ENCODE measurements at regions of chr4 and their contacts with region 1.

Region 1: DNA sequence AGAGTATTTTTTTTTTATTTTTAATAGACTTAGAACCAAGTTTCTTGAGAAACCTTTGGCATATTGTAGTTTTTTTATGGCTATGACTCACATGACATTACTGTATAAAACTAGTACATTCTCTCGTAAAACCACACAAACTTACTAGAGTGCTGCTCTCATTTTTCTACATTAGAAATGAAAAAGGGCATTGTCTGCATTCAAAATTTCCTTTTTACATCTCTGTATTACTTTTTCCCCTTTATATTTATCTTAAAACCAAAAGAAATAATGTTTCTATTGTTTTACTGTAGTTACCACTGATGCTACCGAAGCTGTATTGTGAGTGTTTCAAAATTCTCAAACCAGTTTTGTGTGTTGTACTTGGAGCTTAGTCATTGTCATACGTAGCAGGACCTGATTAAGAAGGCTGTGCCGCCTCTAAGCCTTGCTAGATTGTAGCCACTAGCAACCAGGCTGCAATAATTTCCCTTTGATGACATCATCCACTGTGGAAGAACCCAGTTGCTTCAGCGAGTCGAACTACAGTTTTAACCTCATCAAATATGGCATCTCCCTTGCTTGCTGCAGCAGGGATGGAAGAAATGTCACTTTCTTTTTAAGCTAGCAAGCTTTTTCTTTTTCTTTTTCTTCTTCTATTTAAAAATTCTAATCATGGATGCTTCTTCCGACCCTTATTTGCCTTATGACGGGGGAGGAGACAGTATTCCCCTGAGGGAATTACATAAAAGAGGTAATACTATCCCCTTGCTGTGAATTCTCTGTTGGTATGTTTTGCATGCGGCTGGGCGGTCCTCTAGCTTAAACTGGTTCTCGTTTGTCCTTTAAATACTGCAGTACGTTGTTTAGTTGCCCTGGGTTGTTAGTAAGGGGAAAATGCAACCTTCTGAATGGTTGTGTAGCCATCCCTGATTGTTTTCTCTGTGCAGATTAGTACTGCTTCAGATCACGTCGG is 39.6 kb downstream of the CLCN3 start:
- DNase-seq: peak; percentile 74
- H3K4me3 Mint-ChIP-seq: peak overlapping the region; percentile 82
- H3K27ac Mint-ChIP-seq: peak overlapping the region; percentile 98
- H3K4me1 Mint-ChIP-seq: peaks cover 27% of the 10 kb centered on the region
- H3K27me3 Mint-ChIP-seq: no peaks in the 10 kb centered on the region

Region 2: DNA sequence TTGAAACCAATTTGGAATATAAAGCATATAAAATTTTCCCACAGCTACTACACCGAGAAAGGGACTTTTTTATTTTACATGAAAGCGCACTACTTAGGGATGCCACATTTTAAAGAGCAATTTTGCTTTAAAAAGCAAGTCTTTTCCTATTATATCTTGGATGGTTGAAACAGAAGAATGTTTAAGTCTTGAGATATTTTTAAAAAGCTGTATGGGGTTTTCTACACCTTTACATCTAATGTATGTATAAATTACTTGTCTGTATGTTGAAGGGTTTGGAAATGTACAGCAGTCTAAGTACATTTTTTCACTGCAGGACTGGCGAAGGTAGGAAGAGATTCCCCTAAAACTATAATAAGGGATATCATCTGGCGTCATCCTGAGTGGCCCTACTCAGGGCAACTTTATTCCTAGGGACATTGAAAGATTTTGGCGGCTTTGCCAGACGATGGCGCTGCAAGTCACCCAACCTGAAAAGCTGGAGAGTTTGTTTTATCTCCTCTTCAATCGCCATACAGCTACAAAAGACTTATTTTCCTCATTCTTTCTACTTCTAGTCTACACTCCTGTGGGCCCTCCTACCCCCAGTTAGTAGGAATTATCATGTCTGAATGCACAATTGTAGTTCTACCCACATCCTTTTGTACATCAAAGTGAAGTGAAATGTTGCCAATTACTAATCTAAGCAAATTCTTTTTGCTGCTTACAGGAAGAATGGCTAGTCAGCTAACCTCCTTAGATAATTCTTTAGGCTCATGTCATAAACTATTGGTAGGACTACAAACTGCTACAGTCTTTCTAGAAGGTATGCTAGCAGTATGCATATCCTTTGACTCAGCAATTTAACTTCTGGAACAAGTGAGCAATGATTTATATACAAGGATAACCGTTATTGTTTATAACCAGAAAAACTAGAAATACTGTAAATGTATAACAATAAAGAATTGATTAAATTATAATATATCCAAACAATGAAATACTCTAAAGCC is 46.8 kb before region 1 on chr4:
- intact Hi-C with region 1: loop called (anchors 2 kb)
- DNase-seq: peak; percentile 66
- H3K4me3 Mint-ChIP-seq: peak overlapping the region; percentile 96
- H3K27ac Mint-ChIP-seq: peak overlapping the region; percentile 98
- H3K4me1 Mint-ChIP-seq: peaks cover 50% of the 10 kb centered on the region
- H3K27me3 Mint-ChIP-seq: no peaks in the 10 kb centered on the region

Region 3: DNA sequence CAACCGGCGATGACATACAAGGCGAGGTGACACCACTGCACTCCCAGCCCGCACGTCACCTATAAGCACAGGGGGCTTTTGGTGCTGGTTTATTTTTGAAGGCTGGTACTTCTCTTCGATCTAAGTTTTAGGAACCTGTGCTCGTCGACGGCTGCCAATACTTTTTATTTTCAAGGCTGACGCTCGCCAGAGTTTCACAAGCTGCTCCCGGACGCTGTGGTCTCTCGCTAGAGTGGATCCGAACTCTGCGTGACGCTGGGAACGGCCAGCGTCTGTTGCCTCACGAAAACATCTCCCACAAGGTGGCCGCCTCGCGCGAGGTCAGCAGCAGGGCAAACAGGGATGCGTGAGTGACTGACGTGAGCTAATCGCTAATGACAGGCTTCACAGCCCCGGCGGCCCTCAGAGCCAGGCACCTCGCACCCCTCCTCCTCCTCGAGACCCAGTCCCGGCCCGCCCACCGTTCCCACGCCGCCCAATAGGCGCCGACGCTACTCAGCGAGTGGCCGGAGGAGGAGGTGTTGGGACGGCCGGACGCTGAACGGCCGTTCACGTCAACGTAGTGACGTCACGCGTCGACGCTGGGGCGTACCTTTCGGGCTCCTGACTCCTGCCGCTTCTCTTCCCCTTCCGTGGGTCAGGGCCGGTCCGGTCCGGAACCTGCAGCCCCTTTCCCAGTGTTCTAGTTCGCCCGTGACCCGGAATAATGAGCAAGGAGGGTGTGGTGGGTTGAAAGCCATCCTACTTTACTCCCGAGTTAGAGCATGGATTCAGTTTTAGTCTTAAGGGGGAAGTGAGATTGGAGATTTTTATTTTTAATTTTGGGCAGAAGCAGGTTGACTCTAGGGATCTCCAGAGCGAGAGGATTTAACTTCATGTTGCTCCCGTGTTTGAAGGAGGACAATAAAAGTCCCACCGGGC is 39.8 kb before region 1 on chr4 and contains the start of gene CLCN3:
- intact Hi-C with region 1: loop called (anchors 1 kb)
- DNase-seq: peak; percentile 85
- H3K4me3 Mint-ChIP-seq: peak within 1 kb of the TSS; percentile 99
- H3K27ac Mint-ChIP-seq: peak within 1 kb of the TSS; percentile 99
- H3K4me1 Mint-ChIP-seq: peaks cover 62% of the 10 kb centered on the region
- H3K27me3 Mint-ChIP-seq: no peaks in the 10 kb centered on the region
- total RNA-seq, gene CLCN3: 23.8 and 25.6 TPM in 2 replicates

Region 4: GRCh38 chr4:169707958-169708643 is 48.1 kb after region 1 on chr4:
- intact Hi-C with region 1: loop called (anchors 5 kb)
- DNase-seq: no peak
- H3K4me3 Mint-ChIP-seq: no peak overlapping the region
- H3K27ac Mint-ChIP-seq: no peak overlapping the region
- H3K4me1 Mint-ChIP-seq: peaks cover 2% of the 10 kb centered on the region
- H3K27me3 Mint-ChIP-seq: no peaks in the 10 kb centered on the region

Region 5: GRCh38 chr4:169723207-169723965 is 63.4 kb after region 1 on chr4:
- intact Hi-C with region 1: loop called (anchors 5 kb)
- DNase-seq: no peak
- H3K4me3 Mint-ChIP-seq: no peak overlapping the region
- H3K27ac Mint-ChIP-seq: no peak overlapping the region
- H3K4me1 Mint-ChIP-seq: peaks cover 5% of the 10 kb centered on the region
- H3K27me3 Mint-ChIP-seq: no peaks in the 10 kb centered on the region

Region 6: DNA sequence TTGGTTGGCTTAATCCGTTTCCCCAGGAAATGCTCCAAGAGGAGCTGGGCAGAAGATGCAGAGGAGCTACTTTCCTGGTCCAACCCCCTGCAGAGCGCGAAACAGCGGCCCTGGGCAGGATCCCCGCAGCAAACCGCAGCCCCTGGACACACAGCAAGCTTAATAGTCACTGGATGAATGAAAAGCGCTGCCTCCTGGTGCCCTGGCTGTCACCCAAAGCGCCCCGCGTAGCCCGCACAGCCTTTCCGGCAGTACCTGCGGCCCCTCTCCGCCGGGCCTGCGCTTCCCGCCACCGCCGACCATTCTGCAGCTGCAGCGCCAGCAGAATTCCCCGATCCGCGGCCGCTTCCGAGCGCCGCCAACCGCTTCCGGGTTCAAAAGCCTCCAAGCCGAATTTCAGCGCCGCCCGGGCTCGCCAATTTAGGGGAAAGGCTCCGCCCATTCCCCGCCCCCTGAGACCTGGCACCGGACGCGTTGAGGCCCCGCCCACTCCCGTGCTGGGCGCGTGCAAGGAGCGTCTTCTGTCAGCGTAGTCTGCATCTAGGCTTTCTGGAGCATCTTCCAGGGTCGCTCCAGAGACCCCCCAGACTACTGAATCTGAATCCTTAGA is 97.7 kb after region 1 on chr4 and contains the start of gene HPF1:
- intact Hi-C with region 1: loop called (anchors 1 kb)
- DNase-seq: peak; percentile 90
- H3K4me3 Mint-ChIP-seq: peak within 1 kb of the TSS; percentile 91
- H3K27ac Mint-ChIP-seq: peak within 1 kb of the TSS; percentile 67
- H3K4me1 Mint-ChIP-seq: peaks cover 27% of the 10 kb centered on the region
- H3K27me3 Mint-ChIP-seq: peaks cover 11% of the 10 kb centered on the region
- total RNA-seq, gene HPF1: 23.6 and 24.1 TPM in 2 replicates

Region 7: GRCh38 chr4:170027181-170027829 is 367.3 kb after region 1 on chr4:
- intact Hi-C with region 1: loop called (anchors 1 kb)
- DNase-seq: peak; percentile 83
- H3K4me3 Mint-ChIP-seq: peak overlapping the region; percentile 79
- H3K27ac Mint-ChIP-seq: peak overlapping the region; percentile 63
- H3K4me1 Mint-ChIP-seq: peaks cover 7% of the 10 kb centered on the region
- H3K27me3 Mint-ChIP-seq: peaks cover 51% of the 10 kb centered on the region